Calu3 (cell line): ENCODE measurements at regions of chr4 and their contacts with region 1.

Region 1: GRCh38 chr4:123661080-123661737 is 264.6 kb downstream of the SPRY1 start:
- DNase-seq: no peak
- H3K4me3 Mint-ChIP-seq: no peak overlapping the region
- H3K27ac Mint-ChIP-seq: no peak overlapping the region
- H3K4me1 Mint-ChIP-seq: peaks cover 19% of the 10 kb centered on the region
- H3K27me3 Mint-ChIP-seq: no peaks in the 10 kb centered on the region
- CTCF ChIP-seq: peak; percentile 28

Region 2: DNA sequence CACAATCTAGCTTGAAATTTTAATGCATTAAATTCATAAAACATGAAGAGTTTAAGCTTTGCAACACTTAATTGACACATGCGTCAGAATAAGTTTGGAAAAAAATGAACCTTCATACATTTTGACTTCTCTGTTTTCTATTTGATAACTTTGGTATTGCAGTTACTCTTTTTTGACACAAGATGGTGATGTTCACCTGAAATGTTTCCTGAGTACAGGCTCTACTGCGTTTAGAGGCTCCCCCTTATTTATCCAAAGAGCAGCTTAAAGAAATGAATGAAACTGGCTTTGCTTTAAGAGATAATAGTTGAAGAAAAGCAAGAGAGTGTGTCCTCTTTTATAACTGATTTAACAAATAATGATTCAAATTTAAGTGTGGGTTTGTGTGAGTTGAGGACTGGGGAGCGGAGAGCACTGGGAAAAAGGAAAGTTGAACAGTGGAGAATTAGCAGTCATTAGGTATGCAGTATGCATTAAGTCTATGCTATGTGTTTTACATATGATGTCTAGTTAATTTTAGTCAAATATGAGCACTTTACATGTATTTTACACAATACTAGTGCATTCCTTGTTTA is 558.2 kb before region 1 on chr4:
- CTCF ChIA-PET with region 1: no interaction called
- intact Hi-C with region 1: loop called (anchors 1 kb)
- DNase-seq: no peak
- H3K4me3 Mint-ChIP-seq: no peak overlapping the region
- H3K27ac Mint-ChIP-seq: no peak overlapping the region
- H3K4me1 Mint-ChIP-seq: peaks cover 7% of the 10 kb centered on the region
- H3K27me3 Mint-ChIP-seq: no peaks in the 10 kb centered on the region
- CTCF ChIP-seq: peak; percentile 33

Region 3: GRCh38 chr4:123390846-123391456 is 270.3 kb before region 1 on chr4:
- CTCF ChIA-PET with region 1: no interaction called
- intact Hi-C with region 1: loop called (anchors 1 kb)
- DNase-seq: no peak
- H3K4me3 Mint-ChIP-seq: no peak overlapping the region
- H3K27ac Mint-ChIP-seq: no peak overlapping the region
- H3K4me1 Mint-ChIP-seq: no peaks in the 10 kb centered on the region
- H3K27me3 Mint-ChIP-seq: no peaks in the 10 kb centered on the region
- CTCF ChIP-seq: no peak

Region 4: GRCh38 chr4:123555233-123555806 is 105.9 kb before region 1 on chr4:
- CTCF ChIA-PET with region 1: no interaction called
- intact Hi-C with region 1: loop called (anchors 2 kb)
- DNase-seq: peak; percentile 88
- H3K4me3 Mint-ChIP-seq: peak overlapping the region; percentile 55
- H3K27ac Mint-ChIP-seq: peak overlapping the region; percentile 90
- H3K4me1 Mint-ChIP-seq: peaks cover 67% of the 10 kb centered on the region
- H3K27me3 Mint-ChIP-seq: no peaks in the 10 kb centered on the region
- CTCF ChIP-seq: no peak

Region 5: DNA sequence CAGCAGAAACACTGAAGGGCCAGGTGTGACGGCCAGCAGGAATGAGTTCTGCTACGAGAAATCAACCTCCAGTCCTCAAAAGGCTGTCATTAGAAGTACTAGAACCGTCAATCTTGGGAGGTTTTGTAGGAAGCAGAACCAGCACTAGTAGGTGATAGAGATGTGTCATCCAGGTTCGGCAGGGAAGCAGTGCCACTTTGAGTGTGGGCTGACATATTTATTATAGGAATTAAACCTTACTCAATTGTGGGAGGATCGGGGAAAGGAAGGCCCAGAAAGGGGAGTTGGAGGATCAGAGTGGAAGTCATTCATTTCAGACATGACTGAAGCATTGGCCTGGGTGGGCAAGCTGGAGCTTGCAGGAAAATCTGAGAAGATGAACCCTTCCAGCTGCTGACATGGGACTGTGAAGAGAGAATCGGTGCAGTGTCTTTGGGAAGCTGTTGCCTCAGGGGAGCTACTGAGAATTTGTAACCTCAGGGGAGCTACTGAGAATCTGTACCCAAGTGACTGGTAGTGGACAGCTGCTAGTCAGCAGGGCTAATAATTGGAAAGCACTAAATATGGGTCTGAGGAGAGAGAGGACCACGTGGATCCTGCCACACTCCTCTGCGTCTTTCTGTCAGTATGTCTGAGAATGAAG is 87.2 kb before region 1 on chr4:
- CTCF ChIA-PET with region 1: no interaction called
- intact Hi-C with region 1: no loop called
- DNase-seq: no peak
- H3K4me3 Mint-ChIP-seq: no peak overlapping the region
- H3K27ac Mint-ChIP-seq: no peak overlapping the region
- H3K4me1 Mint-ChIP-seq: no peaks in the 10 kb centered on the region
- H3K27me3 Mint-ChIP-seq: no peaks in the 10 kb centered on the region
- CTCF ChIP-seq: no peak

Region 6: GRCh38 chr4:124262211-124263179 is 601.3 kb after region 1 on chr4:
- CTCF ChIA-PET with region 1: no interaction called
- intact Hi-C with region 1: loop called (anchors 5 kb)
- DNase-seq: peak; percentile 65
- H3K4me3 Mint-ChIP-seq: no peak overlapping the region
- H3K27ac Mint-ChIP-seq: no peak overlapping the region
- H3K4me1 Mint-ChIP-seq: peaks cover 10% of the 10 kb centered on the region
- H3K27me3 Mint-ChIP-seq: no peaks in the 10 kb centered on the region
- CTCF ChIP-seq: peak; percentile 56